MCF 10A (cell line): ENCODE measurements at regions of chr1 and their contacts with region 1.

Region 1: GRCh38 chr1:169809370-169810095 is 14.8 kb upstream of the METTL18 start:
- DNase-seq: peak; percentile 60
- H3K4me3 Mint-ChIP-seq: no peak overlapping the region
- H3K27ac Mint-ChIP-seq: no peak overlapping the region
- H3K4me1 Mint-ChIP-seq: no peaks in the 10 kb centered on the region
- H3K27me3 Mint-ChIP-seq: no peaks in the 10 kb centered on the region
- CTCF ChIP-seq: peak; percentile 59

Region 2: GRCh38 chr1:169466259-169467230 is 343.0 kb before region 1 on chr1:
- CTCF ChIA-PET with region 1: interaction called, 3 read pairs
- POLR2A ChIA-PET with region 1: no interaction called
- intact Hi-C with region 1: loop called (anchors 5 kb)
- DNase-seq: peak; percentile 72
- H3K4me3 Mint-ChIP-seq: no peak overlapping the region
- H3K27ac Mint-ChIP-seq: no peak overlapping the region
- H3K4me1 Mint-ChIP-seq: peaks cover 8% of the 10 kb centered on the region
- H3K27me3 Mint-ChIP-seq: no peaks in the 10 kb centered on the region
- CTCF ChIP-seq: peak; percentile 65

Region 3: DNA sequence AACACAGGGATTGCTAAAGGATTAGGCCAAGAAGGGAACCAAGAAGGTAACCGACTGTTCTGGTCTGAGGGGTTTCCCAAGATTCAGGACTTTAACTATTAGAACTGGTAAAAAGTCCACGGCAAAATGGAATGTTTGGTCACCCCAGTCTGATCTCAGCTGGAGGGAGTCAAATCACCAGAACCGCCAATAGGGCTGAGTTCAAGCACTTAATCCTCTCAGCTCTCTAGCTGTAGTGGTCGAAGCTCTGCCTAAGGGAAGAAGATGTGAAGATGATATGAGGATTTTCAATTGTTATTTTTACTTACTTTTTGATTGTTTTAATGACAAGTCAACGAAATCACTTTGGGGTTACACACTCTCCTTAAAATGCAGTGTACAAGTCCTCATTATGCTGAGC is 252.4 kb before region 1 on chr1:
- CTCF ChIA-PET with region 1: interaction called, 118 read pairs
- POLR2A ChIA-PET with region 1: no interaction called
- intact Hi-C with region 1: no loop called
- DNase-seq: no peak
- H3K4me3 Mint-ChIP-seq: no peak overlapping the region
- H3K27ac Mint-ChIP-seq: no peak overlapping the region
- H3K4me1 Mint-ChIP-seq: no peaks in the 10 kb centered on the region
- H3K27me3 Mint-ChIP-seq: peaks cover 89% of the 10 kb centered on the region
- CTCF ChIP-seq: no peak

Region 4: DNA sequence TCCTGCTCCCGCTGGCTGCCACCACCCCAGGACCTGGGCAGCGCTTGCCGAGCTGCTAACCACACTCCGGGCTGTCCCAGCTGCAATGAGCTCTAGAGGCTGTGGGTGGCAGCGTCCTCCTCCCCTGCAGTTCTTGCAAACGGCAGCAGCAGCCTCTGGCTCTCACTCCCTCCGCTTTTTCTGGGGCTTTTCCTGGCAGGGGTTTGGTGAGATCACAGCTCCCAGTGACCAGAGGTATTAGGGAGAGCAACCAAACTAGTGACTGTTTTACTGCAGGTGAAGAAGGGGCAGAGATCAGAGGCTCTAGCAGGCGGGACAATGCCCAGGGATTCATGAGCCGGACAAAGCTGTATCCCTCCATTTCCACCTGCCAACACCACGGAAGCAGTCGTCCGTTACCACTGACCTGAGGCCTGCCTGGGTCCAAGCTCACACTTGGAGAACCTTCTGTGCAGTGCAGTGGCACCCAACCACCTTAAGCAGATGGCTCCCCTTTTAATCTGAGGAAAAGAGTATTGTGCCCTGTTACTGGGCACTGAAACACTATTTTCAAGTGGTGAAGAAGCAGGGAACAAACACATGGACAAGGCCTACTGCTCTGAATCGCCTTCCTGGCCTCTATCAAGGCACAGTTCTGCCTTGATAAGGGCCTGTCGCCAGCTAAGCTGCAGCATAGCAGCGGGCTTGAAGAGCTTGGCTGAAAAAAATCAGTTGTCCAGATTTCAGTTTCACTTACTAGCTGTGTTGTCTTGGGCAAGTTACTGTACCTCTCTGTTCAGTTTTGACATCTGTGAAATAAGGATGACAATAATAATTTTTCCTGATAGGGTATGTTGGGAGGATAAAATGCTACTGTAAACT is 222.9 kb before region 1 on chr1 and contains the start of gene F5:
- CTCF ChIA-PET with region 1: interaction called, 17 read pairs
- POLR2A ChIA-PET with region 1: no interaction called
- intact Hi-C with region 1: no loop called
- DNase-seq: peak; percentile 79
- H3K4me3 Mint-ChIP-seq: peak within 1 kb of the TSS; percentile 45
- H3K27ac Mint-ChIP-seq: no peak within 1 kb of the TSS
- H3K4me1 Mint-ChIP-seq: no peaks in the 10 kb centered on the region
- H3K27me3 Mint-ChIP-seq: peaks cover 9% of the 10 kb centered on the region
- CTCF ChIP-seq: peak; percentile 35
- total RNA-seq, gene F5: 0.09 TPM in 1 of 2 replicates, not detected in the other

Region 5: DNA sequence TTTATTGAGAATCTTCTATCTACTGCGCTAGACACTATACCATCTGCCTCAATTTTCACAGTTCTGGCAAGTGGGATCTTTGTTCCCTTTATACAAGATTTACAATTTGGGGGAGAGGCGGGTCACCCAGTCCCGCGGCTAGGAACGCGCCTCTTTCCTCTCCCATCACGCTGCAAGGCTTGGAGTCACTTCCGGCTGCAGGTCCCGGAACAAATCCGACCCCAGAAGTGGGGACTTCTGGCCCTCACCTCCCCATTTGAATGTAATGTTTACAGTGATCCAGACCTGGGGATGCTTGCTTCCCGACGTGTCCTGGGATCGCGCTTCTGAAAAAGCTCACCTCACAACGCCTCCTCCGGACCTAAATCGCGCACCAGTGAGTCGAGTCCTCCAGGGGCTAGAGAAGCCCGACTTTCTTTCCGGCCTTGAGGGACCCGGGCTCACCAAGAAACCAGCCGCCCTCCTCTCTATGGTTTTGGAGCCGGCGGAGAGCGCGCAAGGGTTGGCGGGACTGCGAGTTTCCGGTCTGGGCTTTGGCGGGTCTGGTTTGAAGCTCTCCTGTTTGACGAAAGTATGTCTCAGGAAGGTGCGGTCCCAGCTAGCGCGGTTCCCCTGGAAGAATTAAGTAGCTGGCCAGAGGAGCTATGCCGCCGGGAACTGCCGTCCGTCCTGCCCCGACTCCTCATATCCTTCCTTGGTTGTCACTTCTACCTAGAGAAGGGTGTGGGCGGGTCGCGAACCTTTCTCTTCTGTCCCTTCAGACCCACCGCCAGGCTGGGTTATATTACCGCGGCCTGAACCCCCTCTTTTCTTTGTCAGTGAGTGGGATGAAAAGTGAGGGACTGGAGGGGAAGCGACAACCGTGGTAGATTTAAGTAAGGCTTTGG is 14.8 kb before region 1 on chr1 and contains the start of gene METTL18:
- CTCF ChIA-PET with region 1: interaction called, 47 read pairs
- POLR2A ChIA-PET with region 1: interaction called, 14 read pairs
- intact Hi-C with region 1: no loop called
- DNase-seq: peak; percentile 98
- H3K4me3 Mint-ChIP-seq: peak within 1 kb of the TSS; percentile 100
- H3K27ac Mint-ChIP-seq: peak within 1 kb of the TSS; percentile 99
- H3K4me1 Mint-ChIP-seq: peaks cover 10% of the 10 kb centered on the region
- H3K27me3 Mint-ChIP-seq: no peaks in the 10 kb centered on the region
- CTCF ChIP-seq: peak; percentile 53
- total RNA-seq, gene METTL18: 2.8 and 4.1 TPM in 2 replicates

Region 6: DNA sequence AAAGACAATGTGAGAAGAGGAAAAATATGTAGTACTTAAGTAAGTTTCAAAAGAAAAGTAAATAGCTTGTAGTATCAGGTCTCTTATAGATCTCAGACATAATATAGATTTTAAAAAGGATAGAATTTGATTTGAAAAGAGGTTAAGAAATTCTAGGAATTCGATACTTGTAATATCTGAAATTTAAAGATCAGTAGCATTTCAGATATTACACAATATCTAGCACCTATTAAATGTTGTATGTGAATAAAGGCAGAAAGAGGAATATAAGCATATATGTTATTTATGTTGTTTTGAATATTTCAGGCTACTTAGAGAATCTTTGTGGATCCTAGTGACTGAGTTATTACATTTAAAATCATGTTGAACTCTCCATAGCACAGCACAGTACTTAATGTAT is 20.1 kb after region 1 on chr1:
- CTCF ChIA-PET with region 1: interaction called, 26 read pairs
- POLR2A ChIA-PET with region 1: no interaction called
- intact Hi-C with region 1: no loop called
- DNase-seq: no peak
- H3K4me3 Mint-ChIP-seq: no peak overlapping the region
- H3K27ac Mint-ChIP-seq: peak overlapping the region; percentile 41
- H3K4me1 Mint-ChIP-seq: no peaks in the 10 kb centered on the region
- H3K27me3 Mint-ChIP-seq: no peaks in the 10 kb centered on the region
- CTCF ChIP-seq: no peak

Region 7: GRCh38 chr1:169964206-169964605 is 154.7 kb after region 1 on chr1:
- CTCF ChIA-PET with region 1: no interaction called
- POLR2A ChIA-PET with region 1: no interaction called
- intact Hi-C with region 1: no loop called
- DNase-seq: no peak
- H3K4me3 Mint-ChIP-seq: no peak overlapping the region
- H3K27ac Mint-ChIP-seq: no peak overlapping the region
- H3K4me1 Mint-ChIP-seq: no peaks in the 10 kb centered on the region
- H3K27me3 Mint-ChIP-seq: no peaks in the 10 kb centered on the region
- CTCF ChIP-seq: no peak

Region 8: GRCh38 chr1:170267316-170267715 is 457.8 kb after region 1 on chr1:
- CTCF ChIA-PET with region 1: no interaction called
- POLR2A ChIA-PET with region 1: no interaction called
- intact Hi-C with region 1: no loop called
- DNase-seq: peak; percentile 34
- H3K4me3 Mint-ChIP-seq: no peak overlapping the region
- H3K27ac Mint-ChIP-seq: no peak overlapping the region
- H3K4me1 Mint-ChIP-seq: no peaks in the 10 kb centered on the region
- H3K27me3 Mint-ChIP-seq: no peaks in the 10 kb centered on the region
- CTCF ChIP-seq: no peak